PC-9 (cell line): ENCODE measurements at regions of chr20 and their contacts with region 1.

Region 1: GRCh38 chr20:41476013-41476752 is 109.6 kb upstream of the EMILIN3 start:
- DNase-seq: peak; percentile 34 to 90
- H3K4me3 ChIP-seq: no peak overlapping the region
- H3K27ac ChIP-seq: peak overlapping the region; percentile 15
- H3K4me1 ChIP-seq: peaks cover 20% of the 10 kb centered on the region
- H3K27me3 ChIP-seq: no peaks in the 10 kb centered on the region
- CTCF ChIP-seq: no peak

Region 2: GRCh38 chr20:41131594-41132387 is 344.4 kb before region 1 on chr20:
- CTCF ChIA-PET with region 1: interaction called, 13 read pairs
- POLR2A ChIA-PET with region 1: no interaction called
- intact Hi-C with region 1: no loop called
- DNase-seq: no peak
- H3K4me3 ChIP-seq: no peak overlapping the region
- H3K27ac ChIP-seq: no peak overlapping the region
- H3K4me1 ChIP-seq: peaks cover 4% of the 10 kb centered on the region; the same call in 1 of the 2 replicates
- H3K27me3 ChIP-seq: no peaks in the 10 kb centered on the region
- CTCF ChIP-seq: no peak

Region 3: GRCh38 chr20:41443691-41444090 is 32.5 kb before region 1 on chr20:
- CTCF ChIA-PET with region 1: no interaction called
- POLR2A ChIA-PET with region 1: no interaction called
- intact Hi-C with region 1: no loop called
- DNase-seq: no peak
- H3K4me3 ChIP-seq: no peak overlapping the region
- H3K27ac ChIP-seq: no peak overlapping the region
- H3K4me1 ChIP-seq: no peaks in the 10 kb centered on the region
- H3K27me3 ChIP-seq: no peaks in the 10 kb centered on the region
- CTCF ChIP-seq: no peak

Region 4: DNA sequence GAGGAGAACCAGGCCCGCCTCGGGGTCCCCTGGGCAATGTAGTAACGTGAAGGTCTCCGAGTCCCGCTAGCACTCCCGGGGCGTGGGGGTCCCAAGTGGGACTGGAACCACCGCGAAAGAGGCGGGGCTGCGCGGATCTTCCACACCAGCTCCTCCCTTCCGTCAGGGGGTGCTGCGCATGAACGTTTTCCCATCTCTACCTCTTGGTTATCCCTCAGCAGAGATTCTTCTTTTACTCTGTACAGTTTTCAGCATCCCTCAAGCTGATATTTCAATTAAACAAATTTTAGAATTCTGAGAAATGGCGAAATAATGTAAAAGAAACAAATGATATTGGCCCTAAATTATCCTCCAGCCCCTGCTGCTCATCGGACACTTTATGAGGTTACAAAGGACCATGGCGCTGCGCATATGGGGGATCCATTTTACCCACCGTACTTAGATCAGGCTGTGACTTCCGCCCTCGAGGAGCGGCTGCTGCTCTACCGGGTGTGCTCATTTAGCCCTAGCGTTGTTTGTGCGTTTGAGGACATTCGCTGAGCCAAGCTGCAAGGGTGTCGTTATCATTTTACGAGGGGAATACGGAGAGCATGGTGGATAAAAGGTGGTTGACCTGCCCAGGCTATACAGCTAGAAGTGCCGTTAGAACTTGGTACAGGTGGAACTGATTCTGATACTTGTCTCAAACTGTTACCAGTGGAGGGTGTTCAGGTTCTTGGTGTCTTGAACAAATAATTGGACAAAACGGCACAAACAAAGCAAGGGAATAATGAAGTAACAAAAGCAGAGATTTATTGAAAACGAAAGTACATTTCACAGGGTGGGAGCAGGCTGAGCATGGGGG is 217.2 kb after region 1 on chr20:
- CTCF ChIA-PET with region 1: no interaction called
- POLR2A ChIA-PET with region 1: no interaction called
- intact Hi-C with region 1: loop called (anchors 5 kb)
- DNase-seq: peak; percentile 76 to 87
- H3K4me3 ChIP-seq: peak overlapping the region; percentile 83
- H3K27ac ChIP-seq: peak overlapping the region; percentile 52
- H3K4me1 ChIP-seq: peaks cover 12% of the 10 kb centered on the region
- H3K27me3 ChIP-seq: peaks cover 15% of the 10 kb centered on the region; the same call in 1 of the 2 replicates
- CTCF ChIP-seq: peak; percentile 66; the same call in 1 of the 2 replicates